OCI-LY7 (cell line): ENCODE measurements at regions of chr1 and their contacts with region 1.

Region 1: DNA sequence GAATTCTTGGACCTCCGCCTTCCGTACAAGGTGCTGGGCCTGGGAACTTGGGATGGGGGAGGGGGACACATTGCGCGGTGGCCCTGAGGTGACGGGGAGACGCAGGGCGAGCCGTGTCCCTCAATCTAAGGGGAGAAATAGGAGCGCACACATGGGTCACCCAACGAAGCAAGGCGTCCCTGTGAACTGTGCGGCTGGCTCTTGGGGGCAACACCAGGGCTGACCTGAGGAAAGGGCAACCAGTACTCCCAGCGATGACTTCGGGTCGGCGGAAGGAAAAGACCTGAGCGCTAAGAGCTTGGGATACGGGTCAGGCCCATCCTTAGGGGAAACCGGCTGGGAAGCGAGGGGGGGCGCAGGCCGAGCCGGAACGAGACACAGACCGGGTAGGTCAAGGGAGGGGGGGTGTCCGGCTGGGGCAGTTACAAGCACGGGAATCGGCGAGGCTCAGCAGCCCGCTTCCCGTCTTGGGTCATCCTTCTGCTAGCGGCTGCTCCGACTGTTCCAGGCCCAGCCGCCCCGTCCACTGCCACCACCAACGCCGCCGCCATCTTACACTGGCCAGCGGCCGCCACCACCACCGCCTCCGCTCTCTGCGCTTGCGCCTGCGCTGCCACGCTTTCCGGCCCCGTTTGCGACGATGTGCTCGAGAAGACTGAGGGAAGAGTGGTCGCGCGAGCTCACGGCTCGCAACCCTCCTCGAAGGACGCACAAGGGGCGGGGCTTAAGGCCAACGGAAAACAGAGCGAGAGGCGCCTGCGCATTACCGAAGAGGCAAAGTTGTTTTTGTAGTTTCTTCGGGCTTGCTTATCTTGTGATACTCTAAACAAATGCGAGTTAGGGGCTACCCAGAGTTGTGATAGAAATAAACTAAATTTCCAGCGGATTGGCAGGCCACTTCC is at the start of gene DCAF8:
- DNase-seq: peak; percentile 99
- H3K4me3 ChIP-seq: peak within 1 kb of the TSS; percentile 88
- H3K27ac ChIP-seq: peak within 1 kb of the TSS; percentile 67
- H3K4me1 ChIP-seq: peaks cover 21% of the 10 kb centered on the region
- CTCF ChIP-seq: no peak
- total RNA-seq, gene DCAF8: 102 and 118 TPM in 2 replicates

Region 2: DNA sequence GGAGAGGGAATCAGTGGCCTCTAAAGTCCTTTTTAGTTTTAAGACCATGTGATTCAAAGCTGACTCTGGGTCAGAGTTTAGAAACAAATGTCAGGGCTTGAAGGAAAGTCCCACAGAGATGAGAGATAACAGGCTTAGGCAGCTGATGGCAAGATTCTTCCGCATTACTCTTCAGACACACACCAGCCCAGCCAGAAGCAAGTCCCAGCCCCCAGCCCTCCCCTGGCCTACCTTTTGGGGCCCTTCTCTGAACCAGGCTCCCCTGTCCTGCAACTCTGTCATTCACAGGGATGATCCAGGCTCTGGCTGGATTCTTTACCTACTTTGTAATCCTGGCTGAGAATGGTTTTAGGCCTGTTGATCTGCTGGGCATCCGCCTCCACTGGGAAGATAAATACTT is 84.9 kb before region 1 on chr1:
- CTCF ChIA-PET with region 1: no interaction called
- POLR2A ChIA-PET with region 1: no interaction called
- intact Hi-C with region 1: no loop called
- DNase-seq: no peak
- H3K4me3 ChIP-seq: no peak overlapping the region
- H3K27ac ChIP-seq: no peak overlapping the region
- H3K4me1 ChIP-seq: no peaks in the 10 kb centered on the region
- CTCF ChIP-seq: no peak

Region 3: DNA sequence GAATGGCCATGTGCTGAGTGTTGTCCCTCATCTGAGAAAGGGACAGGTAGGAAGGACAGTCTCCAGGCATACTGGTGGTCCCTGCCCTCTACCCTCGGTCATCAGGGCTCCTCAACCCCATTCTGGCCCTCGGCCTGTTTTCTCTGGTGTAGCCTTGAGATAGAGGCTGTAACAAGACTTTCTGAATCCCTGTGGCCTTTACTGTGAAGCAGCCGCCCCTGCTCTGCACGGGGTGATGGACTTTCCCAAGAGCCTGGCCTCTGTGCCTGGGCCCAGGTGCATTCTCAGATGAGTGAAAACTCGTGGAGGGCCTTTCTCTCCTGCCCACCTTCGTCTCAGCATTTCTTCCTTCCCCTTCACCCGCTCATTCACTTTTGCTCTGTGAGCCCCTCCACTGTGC is 74.7 kb before region 1 on chr1:
- CTCF ChIA-PET with region 1: no interaction called
- POLR2A ChIA-PET with region 1: no interaction called
- intact Hi-C with region 1: no loop called
- DNase-seq: no peak
- H3K4me3 ChIP-seq: no peak overlapping the region
- H3K27ac ChIP-seq: no peak overlapping the region
- H3K4me1 ChIP-seq: no peaks in the 10 kb centered on the region
- CTCF ChIP-seq: no peak

Region 4: DNA sequence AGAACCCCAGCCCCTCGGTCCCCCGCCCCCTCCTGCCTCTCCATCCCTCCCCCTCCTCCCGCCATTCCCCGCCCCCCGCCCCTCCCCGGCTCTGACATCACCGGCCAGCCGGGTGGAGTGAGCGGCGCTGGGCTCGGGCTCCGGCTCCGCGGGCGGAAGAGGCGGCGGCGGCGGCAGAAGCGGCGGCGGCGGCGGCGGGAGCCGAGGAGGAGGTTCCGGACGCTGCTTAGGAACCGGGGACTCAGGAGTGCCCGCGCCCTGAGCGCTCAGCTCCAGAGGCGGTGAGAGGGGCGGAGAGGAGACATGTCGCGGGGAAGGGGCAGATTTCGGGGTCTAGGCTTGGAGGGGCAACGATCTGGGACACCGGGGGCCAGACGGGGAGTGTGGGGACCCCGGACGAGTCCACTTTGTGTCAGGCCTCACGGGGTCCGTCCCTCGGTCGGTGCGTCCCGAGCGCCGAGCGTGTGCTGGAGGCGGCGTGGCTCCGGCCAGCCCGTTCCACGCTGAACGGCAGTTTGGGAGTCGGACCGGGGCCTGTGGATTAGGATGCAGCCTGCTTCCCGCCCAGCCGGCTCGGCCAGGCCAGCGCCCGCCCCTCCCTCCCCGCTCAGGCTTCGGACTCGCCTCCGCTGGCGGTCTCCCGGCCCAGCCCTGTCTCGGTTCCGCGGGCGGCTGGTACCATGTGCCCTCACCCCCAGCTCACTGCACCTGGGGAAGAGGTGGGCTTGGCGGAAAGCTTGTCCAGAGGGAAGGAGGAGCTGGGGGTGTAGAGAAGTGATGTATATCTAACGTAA is 56.7 kb before region 1 on chr1 and contains the start of gene PEA15:
- CTCF ChIA-PET with region 1: interaction called, 3 read pairs
- POLR2A ChIA-PET with region 1: interaction called, 12 read pairs
- intact Hi-C with region 1: loop called (anchors 2 kb)
- DNase-seq: peak; percentile 77
- H3K4me3 ChIP-seq: peak within 1 kb of the TSS; percentile 98
- H3K27ac ChIP-seq: peak within 1 kb of the TSS; percentile 81
- H3K4me1 ChIP-seq: peaks cover 44% of the 10 kb centered on the region
- CTCF ChIP-seq: no peak
- total RNA-seq, gene PEA15: 20.7 and 22.3 TPM in 2 replicates

Region 5: GRCh38 chr1:160251687-160252526 is 10.2 kb before region 1 on chr1:
- CTCF ChIA-PET with region 1: interaction called, 7 read pairs
- POLR2A ChIA-PET with region 1: interaction called, 12 read pairs
- intact Hi-C with region 1: no loop called
- DNase-seq: peak; percentile 83
- H3K4me3 ChIP-seq: no peak overlapping the region
- H3K27ac ChIP-seq: no peak overlapping the region
- H3K4me1 ChIP-seq: no peaks in the 10 kb centered on the region
- CTCF ChIP-seq: peak; percentile 96

Region 6: DNA sequence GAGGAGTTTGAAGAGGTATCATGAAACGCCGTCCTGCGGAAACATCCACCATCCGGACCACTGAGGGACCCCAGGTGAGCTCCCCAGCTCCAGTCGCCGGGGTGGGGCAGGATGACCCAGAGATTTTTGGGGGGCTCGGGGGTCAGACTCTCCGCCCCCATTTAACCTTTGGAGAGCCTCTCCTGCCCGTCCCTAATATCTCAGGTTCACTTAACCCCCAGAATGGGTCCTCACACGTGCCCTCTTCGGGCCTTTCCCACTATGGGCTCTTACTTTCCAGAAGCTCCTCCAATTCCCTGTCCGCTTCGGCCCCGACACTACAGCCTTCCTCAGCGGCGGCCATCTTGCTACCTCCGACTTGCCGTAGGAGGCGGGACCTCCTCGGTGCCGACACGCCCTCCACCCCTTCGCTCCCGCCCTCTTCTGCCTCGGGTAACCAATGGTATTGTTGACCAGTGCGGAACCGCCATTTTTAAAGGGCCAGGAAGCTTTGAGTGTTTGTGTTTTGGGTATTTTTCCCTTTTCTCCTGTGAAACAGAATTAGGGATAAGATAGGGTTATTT is 22.7 kb after region 1 on chr1 and contains the start of gene PEX19:
- CTCF ChIA-PET with region 1: no interaction called
- POLR2A ChIA-PET with region 1: interaction called, 14 read pairs
- intact Hi-C with region 1: no loop called
- DNase-seq: peak; percentile 91
- H3K4me3 ChIP-seq: peak within 1 kb of the TSS; percentile 77
- H3K27ac ChIP-seq: peak within 1 kb of the TSS; percentile 25
- H3K4me1 ChIP-seq: peaks cover 9% of the 10 kb centered on the region
- CTCF ChIP-seq: no peak
- total RNA-seq, gene PEX19: 32.6 and 34.7 TPM in 2 replicates